B cell (primary cell): ENCODE measurements at regions of chr17 and their contacts with region 1.

Region 1: DNA sequence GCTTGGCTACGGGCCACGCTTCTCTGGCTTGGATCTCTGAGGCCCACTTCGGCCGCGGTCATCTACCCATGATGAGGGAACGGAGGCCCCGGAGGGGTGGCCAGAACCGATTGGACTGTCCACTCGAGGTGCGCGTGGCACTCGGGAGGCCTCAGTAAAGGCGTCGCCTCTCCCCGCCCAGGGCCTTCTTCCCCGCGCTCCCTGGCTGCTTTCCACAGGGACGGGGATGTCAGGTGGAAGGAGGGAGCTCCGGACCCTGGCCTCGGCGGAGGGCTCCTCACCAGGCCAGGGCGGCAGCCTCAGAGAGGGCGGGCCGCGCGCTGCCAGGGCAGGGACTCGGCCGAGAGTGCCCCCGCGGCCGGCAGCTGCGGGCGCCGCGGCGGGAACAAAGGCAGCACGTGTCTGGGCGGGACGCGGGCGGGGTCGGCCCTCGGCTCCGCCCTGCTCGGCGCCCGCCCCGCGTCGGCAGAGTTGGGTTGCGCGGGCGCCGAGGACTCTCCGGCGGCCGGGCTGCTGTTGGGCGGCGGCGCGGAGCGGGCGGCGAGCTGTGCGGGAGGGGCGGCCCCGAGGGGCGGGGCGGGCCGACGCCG is 587 bp upstream of the CDK5R1 start:
- DNase-seq: peak; percentile 87
- ATAC-seq: peak; percentile 76
- H3K4me3 ChIP-seq: peak overlapping the region in 4 of 5 experiments; percentile 19 to 64 (median 54)
- H3K4me3 Mint-ChIP-seq: peak overlapping the region; percentile 78
- H3K27ac ChIP-seq: peak overlapping the region in 1 of 2 donors; percentile 69
- H3K27ac Mint-ChIP-seq: peak overlapping the region; percentile 73
- H3K4me1 ChIP-seq: peaks cover 47% of the 10 kb centered on the region in 2 donors
- H3K4me1 Mint-ChIP-seq: peaks cover 50% of the 10 kb centered on the region
- H3K27me3 ChIP-seq: no peaks in the 10 kb centered on the region
- H3K27me3 Mint-ChIP-seq: no peaks in the 10 kb centered on the region
- CTCF ChIP-seq: no peak

Region 2: DNA sequence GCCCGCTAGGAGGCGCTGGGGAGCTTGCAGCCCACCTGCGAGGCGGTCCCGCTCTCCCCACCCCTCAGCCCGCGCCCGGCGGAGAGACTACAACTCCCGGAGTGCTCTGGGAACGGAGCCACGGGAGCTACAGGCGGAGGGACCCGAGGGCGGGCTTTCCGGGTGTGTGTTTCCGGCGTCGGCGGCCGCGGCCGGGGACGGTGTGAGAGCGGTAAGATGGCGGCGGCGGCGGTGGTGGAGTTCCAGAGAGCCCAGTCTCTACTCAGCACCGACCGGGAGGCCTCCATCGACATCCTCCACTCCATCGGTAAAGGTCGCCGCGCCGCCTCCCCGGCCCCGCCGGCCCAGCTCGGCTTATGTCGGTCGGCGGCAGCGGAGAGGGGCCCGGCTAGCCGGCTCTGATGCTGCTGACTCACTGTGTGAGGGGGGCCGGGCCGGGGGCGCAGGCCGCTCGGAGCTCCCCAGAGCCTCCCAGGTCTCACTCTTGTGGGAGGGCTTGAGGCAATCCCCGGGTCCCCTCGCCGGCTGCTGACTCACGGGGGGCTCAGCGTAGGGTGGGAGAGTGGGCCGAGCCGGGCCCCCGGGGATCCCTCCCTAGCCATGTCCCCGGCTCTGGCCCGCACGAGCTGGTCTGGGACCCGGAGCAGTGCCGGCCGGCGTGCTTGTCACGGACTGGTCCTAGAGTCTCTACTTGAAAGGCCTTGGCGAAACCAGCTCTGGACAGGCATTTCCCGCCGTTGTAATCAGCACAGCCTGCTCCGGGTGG is 41.7 kb before region 1 on chr17 and contains the start of gene PSMD11:
- CTCF ChIA-PET with region 1: interaction called, 11 read pairs
- POLR2A ChIA-PET with region 1: no interaction called
- intact Hi-C with region 1: no loop called
- DNase-seq: peak; percentile 98
- ATAC-seq: peak; percentile 98
- H3K4me3 ChIP-seq: peak within 1 kb of the TSS; percentile 78 to 96 (median 95)
- H3K4me3 Mint-ChIP-seq: peak within 1 kb of the TSS; percentile 86
- H3K27ac ChIP-seq: peak within 1 kb of the TSS; percentile 48 to 89
- H3K27ac Mint-ChIP-seq: peak within 1 kb of the TSS; percentile 90
- H3K4me1 ChIP-seq: peaks cover 18 to 23% of the 10 kb centered on the region in 2 donors
- H3K4me1 Mint-ChIP-seq: peaks cover 34% of the 10 kb centered on the region
- H3K27me3 ChIP-seq: peaks cover 0 to 2% (median under 1%) of the 10 kb centered on the region in 4 experiments
- H3K27me3 Mint-ChIP-seq: no peaks in the 10 kb centered on the region
- CTCF ChIP-seq: peak; percentile 46
- total RNA-seq, gene PSMD11: 73.4 and 78.7 TPM in 2 replicates

Region 3: GRCh38 chr17:32470405-32471167 is 15.6 kb before region 1 on chr17:
- CTCF ChIA-PET with region 1: interaction called, 10 read pairs
- POLR2A ChIA-PET with region 1: no interaction called
- intact Hi-C with region 1: no loop called
- DNase-seq: no peak
- ATAC-seq: no peak
- H3K4me3 ChIP-seq: no peak overlapping the region
- H3K4me3 Mint-ChIP-seq: no peak overlapping the region
- H3K27ac ChIP-seq: no peak overlapping the region
- H3K27ac Mint-ChIP-seq: no peak overlapping the region
- H3K4me1 ChIP-seq: no peaks in the 10 kb centered on the region
- H3K4me1 Mint-ChIP-seq: no peaks in the 10 kb centered on the region
- H3K27me3 ChIP-seq: no peaks in the 10 kb centered on the region
- H3K27me3 Mint-ChIP-seq: no peaks in the 10 kb centered on the region
- CTCF ChIP-seq: no peak

Region 4: GRCh38 chr17:32519228-32520103 is 33.3 kb after region 1 on chr17:
- CTCF ChIA-PET with region 1: interaction called, 74 read pairs
- POLR2A ChIA-PET with region 1: interaction called, 13 read pairs
- intact Hi-C with region 1: loop called (anchors 1 kb)
- DNase-seq: peak; percentile 80
- ATAC-seq: peak; percentile 26
- H3K4me3 ChIP-seq: peak overlapping the region; percentile 33 to 68 (median 47)
- H3K4me3 Mint-ChIP-seq: peak overlapping the region; percentile 88
- H3K27ac ChIP-seq: peak overlapping the region; percentile 69 to 79
- H3K27ac Mint-ChIP-seq: peak overlapping the region; percentile 90
- H3K4me1 ChIP-seq: peaks cover 90 to 96% of the 10 kb centered on the region in 2 donors
- H3K4me1 Mint-ChIP-seq: peaks cover 85% of the 10 kb centered on the region
- H3K27me3 ChIP-seq: no peaks in the 10 kb centered on the region
- H3K27me3 Mint-ChIP-seq: no peaks in the 10 kb centered on the region
- CTCF ChIP-seq: no peak

Region 5: DNA sequence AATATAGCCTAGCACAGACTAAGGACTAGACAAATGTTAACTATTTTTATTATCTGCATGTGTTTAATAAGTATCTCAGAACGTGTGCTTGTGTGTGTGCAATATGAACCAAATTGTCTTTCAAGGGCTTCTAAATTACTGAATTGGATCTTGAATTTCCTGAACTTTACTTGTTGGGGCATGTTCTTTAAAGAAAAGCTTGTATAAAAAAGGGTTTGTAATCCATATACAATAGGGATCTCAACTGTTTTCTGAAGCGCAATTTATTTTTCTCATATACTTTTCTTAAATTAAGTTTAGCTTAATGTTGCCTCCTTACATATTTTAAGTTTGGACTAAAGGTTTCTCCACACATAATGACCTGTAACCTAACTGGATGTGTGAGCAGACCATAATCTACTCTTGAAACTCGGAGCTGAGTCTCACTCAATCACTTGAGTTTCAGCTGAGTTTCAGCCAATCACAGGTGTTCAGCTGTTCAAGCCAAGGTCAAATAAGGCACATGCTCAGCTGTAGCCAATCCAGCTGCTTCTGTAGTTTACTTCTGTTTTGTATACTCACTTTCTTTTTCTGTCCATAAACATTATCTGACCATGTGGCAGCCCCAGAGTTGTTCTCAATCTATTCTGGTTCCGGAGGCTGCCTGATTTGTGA is 72.9 kb after region 1 on chr17:
- CTCF ChIA-PET with region 1: interaction called, 6 read pairs
- POLR2A ChIA-PET with region 1: no interaction called
- intact Hi-C with region 1: loop called (anchors 2 kb)
- DNase-seq: peak; percentile 50
- ATAC-seq: no peak
- H3K4me3 ChIP-seq: no peak overlapping the region
- H3K4me3 Mint-ChIP-seq: peak overlapping the region; percentile 52
- H3K27ac ChIP-seq: peak overlapping the region; percentile 69 to 76
- H3K27ac Mint-ChIP-seq: peak overlapping the region; percentile 75
- H3K4me1 ChIP-seq: peaks cover 41% of the 10 kb centered on the region in 2 donors
- H3K4me1 Mint-ChIP-seq: peaks cover 42% of the 10 kb centered on the region
- H3K27me3 ChIP-seq: no peaks in the 10 kb centered on the region
- H3K27me3 Mint-ChIP-seq: no peaks in the 10 kb centered on the region
- CTCF ChIP-seq: no peak

Region 6: DNA sequence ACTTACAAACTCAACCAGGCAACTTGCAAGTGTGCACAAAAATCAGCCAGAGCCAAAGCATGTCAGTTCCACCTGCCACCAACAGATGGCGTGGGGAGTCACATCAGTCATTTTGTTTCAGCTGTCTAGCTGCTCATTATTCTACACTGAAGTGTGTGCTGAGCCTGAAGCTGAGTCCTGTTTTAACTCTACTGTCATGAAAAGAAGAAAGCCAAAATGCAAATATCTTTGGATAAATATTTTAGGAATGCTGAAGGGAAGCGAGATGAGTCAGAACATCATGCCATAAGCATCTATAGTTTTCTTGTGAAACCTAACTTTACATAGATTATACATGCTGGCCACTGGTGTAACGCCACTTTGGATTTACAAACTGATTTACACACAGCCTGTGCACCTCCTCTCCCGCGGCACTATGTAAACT is 173.2 kb after region 1 on chr17:
- CTCF ChIA-PET with region 1: interaction called, 17 read pairs
- POLR2A ChIA-PET with region 1: no interaction called
- intact Hi-C with region 1: no loop called
- DNase-seq: peak; percentile 65
- ATAC-seq: peak; percentile 71
- H3K4me3 ChIP-seq: no peak overlapping the region
- H3K4me3 Mint-ChIP-seq: no peak overlapping the region
- H3K27ac ChIP-seq: no peak overlapping the region
- H3K27ac Mint-ChIP-seq: no peak overlapping the region
- H3K4me1 ChIP-seq: no peaks in the 10 kb centered on the region
- H3K4me1 Mint-ChIP-seq: no peaks in the 10 kb centered on the region
- H3K27me3 ChIP-seq: no peaks in the 10 kb centered on the region
- H3K27me3 Mint-ChIP-seq: no peaks in the 10 kb centered on the region
- CTCF ChIP-seq: peak; percentile 98

Region 7: DNA sequence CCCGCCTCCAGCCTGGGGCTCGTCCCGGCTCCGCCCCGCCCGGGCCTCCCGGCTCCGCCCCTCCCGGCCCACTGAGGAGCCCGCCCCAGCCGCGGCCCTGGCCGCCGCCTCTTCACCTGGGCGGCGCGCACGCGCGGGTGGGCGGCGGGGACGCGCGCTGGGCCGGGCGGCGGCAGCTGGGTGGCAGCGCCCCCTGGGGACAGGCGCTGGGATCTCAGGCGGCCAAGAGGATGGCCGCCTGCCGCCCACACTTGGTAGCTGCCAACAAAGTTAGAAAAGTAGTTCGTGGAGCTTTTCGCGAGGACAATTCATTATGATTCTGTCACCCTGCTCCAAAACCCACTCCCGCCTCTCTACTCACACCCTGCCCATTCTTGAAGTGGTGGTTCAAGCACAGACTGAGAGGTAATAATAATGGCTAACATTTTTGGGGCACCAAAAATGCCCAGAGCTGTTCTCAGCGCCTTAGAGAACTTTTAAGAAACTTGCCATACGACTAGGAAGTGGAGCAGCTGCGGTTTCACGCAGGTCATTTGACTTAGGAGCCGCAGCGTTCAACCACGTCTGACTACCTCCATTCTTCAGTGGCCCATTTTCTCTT is 391.1 kb after region 1 on chr17:
- CTCF ChIA-PET with region 1: interaction called, 9 read pairs
- POLR2A ChIA-PET with region 1: no interaction called
- intact Hi-C with region 1: loop called (anchors 10 kb)
- DNase-seq: peak; percentile 96
- ATAC-seq: peak; percentile 94
- H3K4me3 ChIP-seq: peak overlapping the region in 4 of 5 experiments; percentile 36 to 85 (median 75)
- H3K4me3 Mint-ChIP-seq: peak overlapping the region; percentile 85
- H3K27ac ChIP-seq: peak overlapping the region; percentile 70 to 77
- H3K27ac Mint-ChIP-seq: peak overlapping the region; percentile 90
- H3K4me1 ChIP-seq: peaks cover 12 to 19% of the 10 kb centered on the region in 2 donors
- H3K4me1 Mint-ChIP-seq: peaks cover 20% of the 10 kb centered on the region
- H3K27me3 ChIP-seq: no peaks in the 10 kb centered on the region
- H3K27me3 Mint-ChIP-seq: peaks cover 4% of the 10 kb centered on the region
- CTCF ChIP-seq: peak; percentile 77

Region 8: DNA sequence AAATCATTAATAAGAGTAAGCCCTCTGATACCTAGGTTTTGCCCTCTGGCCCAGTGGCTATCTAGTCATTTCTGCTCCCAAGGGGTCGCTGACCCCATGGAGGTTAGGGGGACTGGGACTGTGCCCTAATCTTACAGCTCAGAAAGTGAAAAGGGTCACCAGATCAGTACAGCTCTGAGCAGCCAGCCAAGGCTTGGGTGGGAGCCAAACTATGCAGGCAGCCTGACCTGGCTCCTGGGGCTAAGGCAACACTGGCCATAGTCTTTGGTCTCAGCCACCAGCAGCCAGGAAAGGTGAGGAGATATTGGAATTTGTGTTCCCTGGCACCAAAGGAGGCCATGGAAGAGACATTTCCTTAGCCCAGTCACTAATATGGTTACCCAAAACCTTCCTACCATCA is 739.3 kb after region 1 on chr17:
- CTCF ChIA-PET with region 1: no interaction called
- POLR2A ChIA-PET with region 1: no interaction called
- intact Hi-C with region 1: no loop called
- DNase-seq: no peak
- ATAC-seq: no peak
- H3K4me3 ChIP-seq: no peak overlapping the region
- H3K4me3 Mint-ChIP-seq: no peak overlapping the region
- H3K27ac ChIP-seq: no peak overlapping the region
- H3K27ac Mint-ChIP-seq: no peak overlapping the region
- H3K4me1 ChIP-seq: no peaks in the 10 kb centered on the region
- H3K4me1 Mint-ChIP-seq: no peaks in the 10 kb centered on the region
- H3K27me3 ChIP-seq: peaks cover 0 to 3% (median 0%) of the 10 kb centered on the region in 4 experiments
- H3K27me3 Mint-ChIP-seq: peaks cover 6% of the 10 kb centered on the region
- CTCF ChIP-seq: no peak